Activated B cell treated with CpG ODN at 0.5 μM for 24 hours (primary cell): ENCODE measurements at regions of chr3 and their contacts with region 1.

Region 1: GRCh38 chr3:108477511-108478147 is 32.8 kb downstream of the MYH15 start:
- DNase-seq: peak; percentile 35
- ATAC-seq: peak; percentile 85
- H3K4me3 Mint-ChIP-seq: no peak overlapping the region
- H3K27ac Mint-ChIP-seq: no peak overlapping the region
- H3K4me1 Mint-ChIP-seq: peaks cover 4% of the 10 kb centered on the region
- H3K27me3 Mint-ChIP-seq: no peaks in the 10 kb centered on the region
- CTCF ChIP-seq: peak; percentile 52

Region 2: DNA sequence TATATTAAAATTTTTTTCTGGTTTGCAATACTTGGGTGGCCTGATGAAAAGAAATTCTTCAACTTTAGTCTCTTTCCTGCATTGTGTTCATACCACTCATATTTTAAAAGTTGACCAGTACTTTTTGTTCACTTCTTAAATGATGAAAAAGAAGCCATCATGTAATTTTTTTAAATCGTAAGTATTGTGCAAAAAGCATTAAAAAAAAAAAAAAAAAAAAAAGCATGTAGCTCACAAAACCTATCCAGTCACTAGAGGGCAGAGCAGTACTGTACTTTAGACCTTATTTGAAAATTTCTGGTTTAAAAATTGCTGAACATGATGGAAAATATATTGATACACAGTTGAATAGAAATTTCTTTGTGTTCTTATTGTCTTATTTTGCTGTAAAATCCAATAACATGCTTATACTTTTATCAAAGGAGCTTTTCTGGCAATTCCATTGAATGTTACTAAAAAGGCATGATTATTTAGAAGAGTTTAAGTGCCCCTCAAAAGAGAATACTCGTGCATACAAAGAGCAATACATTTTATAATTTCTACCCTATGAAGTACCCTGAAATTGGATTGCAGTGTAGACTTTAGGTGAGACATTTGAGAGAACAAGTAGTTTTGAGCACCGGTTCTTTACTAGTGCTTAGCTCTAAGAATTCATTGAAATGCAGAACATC is 817.2 kb before region 1 on chr3:
- CTCF ChIA-PET with region 1: interaction called, 6 read pairs
- POLR2A ChIA-PET with region 1: no interaction called
- intact Hi-C with region 1: loop called (anchors 1 kb)
- DNase-seq: no peak
- ATAC-seq: no peak
- H3K4me3 Mint-ChIP-seq: no peak overlapping the region
- H3K27ac Mint-ChIP-seq: no peak overlapping the region
- H3K4me1 Mint-ChIP-seq: peaks cover 18% of the 10 kb centered on the region
- H3K27me3 Mint-ChIP-seq: no peaks in the 10 kb centered on the region
- CTCF ChIP-seq: peak; percentile 85

Region 3: DNA sequence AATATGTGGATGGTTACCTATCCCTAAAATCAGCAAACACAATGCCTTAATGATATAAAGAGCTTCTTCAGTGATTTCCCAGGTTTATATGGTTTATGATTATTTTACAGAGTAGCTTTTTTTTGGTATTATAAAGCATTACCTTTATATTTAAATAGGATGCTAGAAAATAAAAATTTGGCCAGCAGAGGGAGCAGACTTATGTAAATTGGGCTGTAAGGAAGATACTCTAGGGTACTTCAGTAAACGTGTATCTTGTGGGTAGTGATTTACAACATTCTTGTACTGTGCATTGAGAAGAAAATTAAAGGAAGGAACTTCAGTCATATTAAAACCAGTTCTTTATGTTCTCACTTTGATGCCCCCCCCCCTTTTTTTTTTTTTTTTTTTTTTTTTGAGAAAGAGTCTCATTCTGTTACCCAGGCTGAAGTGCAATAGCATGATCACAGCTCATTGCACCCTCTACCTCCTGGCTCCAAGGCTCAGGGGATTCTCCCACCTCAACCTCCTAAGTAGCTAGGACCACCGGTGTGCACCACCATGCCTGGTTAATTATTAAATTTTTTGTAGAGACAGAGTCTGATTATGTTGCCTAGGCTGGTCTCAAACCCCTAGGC is 787.0 kb before region 1 on chr3:
- CTCF ChIA-PET with region 1: interaction called, 4 read pairs
- POLR2A ChIA-PET with region 1: no interaction called
- intact Hi-C with region 1: loop called (anchors 1 kb)
- DNase-seq: no peak
- ATAC-seq: peak; percentile 61
- H3K4me3 Mint-ChIP-seq: no peak overlapping the region
- H3K27ac Mint-ChIP-seq: no peak overlapping the region
- H3K4me1 Mint-ChIP-seq: peaks cover 6% of the 10 kb centered on the region
- H3K27me3 Mint-ChIP-seq: no peaks in the 10 kb centered on the region
- CTCF ChIP-seq: no peak

Region 4: DNA sequence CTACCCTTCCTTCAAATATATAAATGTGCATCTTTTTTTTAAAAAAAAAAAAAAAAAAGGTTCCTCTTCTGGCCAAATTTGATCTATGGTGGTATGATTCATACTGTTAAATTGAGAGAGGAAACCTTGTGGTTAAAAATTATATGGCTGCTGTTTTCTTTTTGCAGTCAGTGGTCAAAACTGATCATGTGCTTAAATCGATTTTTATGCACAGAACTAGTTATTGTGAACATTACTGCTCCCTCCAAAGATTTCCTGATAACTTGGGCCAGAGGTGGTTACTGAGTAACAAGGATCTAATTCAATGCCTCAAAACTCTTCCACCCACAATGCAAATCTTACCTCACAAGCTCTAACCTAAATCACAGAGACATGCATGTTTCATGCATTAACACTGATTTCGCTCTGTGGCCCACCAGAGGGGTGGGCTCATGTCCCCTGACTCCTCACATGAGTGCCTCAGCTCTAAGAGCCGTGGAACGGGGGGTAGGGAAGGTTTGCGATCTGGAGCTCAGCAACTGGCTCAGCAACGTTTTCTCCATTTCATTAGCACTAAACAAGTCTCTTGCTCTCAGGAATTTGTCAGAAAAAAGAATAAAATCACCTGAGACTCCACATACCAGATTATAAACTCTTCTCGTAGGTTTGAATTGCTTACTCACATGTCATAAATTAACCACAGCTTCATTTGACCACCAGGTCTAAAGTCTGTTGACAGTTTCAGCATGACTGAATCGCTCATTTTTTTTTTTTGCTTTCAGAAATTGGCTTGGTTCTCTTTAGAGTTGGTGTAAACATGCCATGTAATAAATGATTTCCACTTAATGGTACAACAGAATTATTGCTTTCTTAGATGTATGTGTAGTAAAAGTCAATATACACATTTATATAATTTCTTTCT is 667.2 kb before region 1 on chr3:
- CTCF ChIA-PET with region 1: no interaction called
- POLR2A ChIA-PET with region 1: no interaction called
- intact Hi-C with region 1: loop called (anchors 5 kb)
- DNase-seq: no peak
- ATAC-seq: peak; percentile 45
- H3K4me3 Mint-ChIP-seq: no peak overlapping the region
- H3K27ac Mint-ChIP-seq: peak overlapping the region; percentile 53
- H3K4me1 Mint-ChIP-seq: peaks cover 15% of the 10 kb centered on the region
- H3K27me3 Mint-ChIP-seq: no peaks in the 10 kb centered on the region
- CTCF ChIP-seq: no peak

Region 5: DNA sequence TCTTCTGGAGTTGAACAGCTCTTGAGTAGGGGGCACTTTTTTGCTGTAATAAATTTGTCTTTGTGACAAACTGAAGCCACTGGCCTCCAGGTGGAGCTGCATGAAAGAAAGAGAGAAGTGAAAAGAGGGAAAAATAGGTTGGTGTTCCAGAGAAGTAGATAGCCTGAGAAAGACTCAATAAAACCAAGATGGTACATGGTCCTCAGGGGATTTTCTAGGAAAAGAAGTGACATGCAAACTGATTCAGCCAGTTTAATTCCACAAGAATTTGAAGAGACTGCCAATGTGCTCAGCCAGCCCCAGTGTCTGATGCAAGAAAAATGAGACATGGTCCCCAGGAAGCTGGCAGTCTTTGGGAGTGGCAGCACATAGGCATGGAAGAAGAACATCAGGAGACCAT is 539.5 kb before region 1 on chr3:
- CTCF ChIA-PET with region 1: interaction called, 27 read pairs
- POLR2A ChIA-PET with region 1: no interaction called
- intact Hi-C with region 1: loop called (anchors 1 kb)
- DNase-seq: no peak
- ATAC-seq: no peak
- H3K4me3 Mint-ChIP-seq: no peak overlapping the region
- H3K27ac Mint-ChIP-seq: no peak overlapping the region
- H3K4me1 Mint-ChIP-seq: no peaks in the 10 kb centered on the region
- H3K27me3 Mint-ChIP-seq: peaks cover 3% of the 10 kb centered on the region
- CTCF ChIP-seq: no peak

Region 6: DNA sequence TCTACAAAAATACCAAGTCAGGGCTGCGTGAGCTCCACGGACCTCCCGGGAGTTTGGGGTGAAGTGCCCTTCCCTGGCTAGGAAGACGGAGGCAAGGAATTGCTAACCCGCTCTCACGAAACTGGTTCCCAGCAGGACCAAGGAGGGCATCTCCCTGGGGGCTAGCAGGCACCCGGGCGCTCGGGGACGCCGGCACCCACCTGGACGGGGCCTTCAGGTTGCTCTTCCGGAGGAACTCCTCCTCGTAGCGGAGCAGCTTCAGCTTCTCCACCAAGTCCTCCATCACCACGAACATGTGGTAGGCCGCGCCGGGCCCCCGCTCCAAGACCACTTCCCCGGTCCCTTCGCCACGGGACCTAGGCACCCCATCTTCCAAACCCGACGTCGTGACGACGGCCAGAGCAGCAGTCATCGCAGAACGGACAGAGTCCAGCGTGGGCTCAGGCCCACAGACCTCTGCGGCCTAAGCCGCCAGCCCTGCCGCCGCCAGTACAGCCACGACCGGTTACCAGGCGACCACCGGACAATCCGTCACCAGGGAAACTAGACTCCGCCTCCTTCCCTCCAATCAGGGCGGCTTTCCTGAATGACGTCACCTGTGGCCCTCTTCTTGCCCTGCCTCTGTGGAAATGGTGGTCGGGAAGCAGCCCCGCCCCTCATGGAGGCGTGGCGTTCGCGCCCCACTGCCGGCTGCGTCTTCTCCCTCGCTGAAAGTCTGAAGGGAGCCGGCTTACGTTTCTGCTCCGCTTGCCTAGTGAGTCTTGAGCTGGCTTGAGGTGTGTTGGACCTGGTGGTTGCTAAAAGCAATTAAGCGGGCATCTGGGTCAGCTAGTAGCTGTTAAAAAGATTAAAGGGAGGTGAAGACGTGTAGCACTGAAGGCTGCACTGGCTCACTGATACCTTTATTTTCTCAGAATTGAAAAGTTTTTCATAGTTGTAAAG is 255.4 kb before region 1 on chr3 and contains the start of gene IFT57:
- CTCF ChIA-PET with region 1: interaction called, 3 read pairs
- POLR2A ChIA-PET with region 1: no interaction called
- intact Hi-C with region 1: loop called (anchors 2 kb)
- DNase-seq: peak; percentile 95
- ATAC-seq: peak; percentile 91
- H3K4me3 Mint-ChIP-seq: peak within 1 kb of the TSS; percentile 100
- H3K27ac Mint-ChIP-seq: peak within 1 kb of the TSS; percentile 100
- H3K4me1 Mint-ChIP-seq: peaks cover 66% of the 10 kb centered on the region
- H3K27me3 Mint-ChIP-seq: no peaks in the 10 kb centered on the region
- CTCF ChIP-seq: no peak
- total RNA-seq, gene IFT57: 63.2 and 64.9 TPM in 2 replicates

Region 7: DNA sequence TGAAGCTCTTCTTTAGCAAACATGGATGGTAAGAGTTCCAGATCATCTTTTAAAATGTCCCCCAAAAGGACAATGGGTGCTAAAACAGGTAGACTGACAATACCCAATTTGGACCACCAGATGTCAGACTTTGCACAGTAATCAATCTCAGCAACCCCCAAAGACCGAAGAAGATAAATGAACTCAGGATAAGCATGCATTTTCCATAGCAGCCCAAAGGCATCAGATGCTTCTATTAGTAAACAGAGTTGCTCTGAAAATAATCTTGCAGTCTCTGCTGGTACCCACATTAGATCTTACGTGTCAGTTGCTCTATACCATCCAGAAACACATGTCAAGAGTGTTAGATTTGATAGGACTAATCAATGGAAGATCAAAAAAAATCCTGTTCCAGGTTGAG is 12.1 kb after region 1 on chr3:
- CTCF ChIA-PET with region 1: interaction called, 12 read pairs
- POLR2A ChIA-PET with region 1: no interaction called
- intact Hi-C with region 1: no loop called
- DNase-seq: no peak
- ATAC-seq: peak; percentile 72
- H3K4me3 Mint-ChIP-seq: no peak overlapping the region
- H3K27ac Mint-ChIP-seq: no peak overlapping the region
- H3K4me1 Mint-ChIP-seq: no peaks in the 10 kb centered on the region
- H3K27me3 Mint-ChIP-seq: peaks cover 5% of the 10 kb centered on the region
- CTCF ChIP-seq: peak; percentile 29